Aorta (tissue), 5 donors: ENCODE measurements at regions of chr3 and their contacts with region 1.

Region 1: DNA sequence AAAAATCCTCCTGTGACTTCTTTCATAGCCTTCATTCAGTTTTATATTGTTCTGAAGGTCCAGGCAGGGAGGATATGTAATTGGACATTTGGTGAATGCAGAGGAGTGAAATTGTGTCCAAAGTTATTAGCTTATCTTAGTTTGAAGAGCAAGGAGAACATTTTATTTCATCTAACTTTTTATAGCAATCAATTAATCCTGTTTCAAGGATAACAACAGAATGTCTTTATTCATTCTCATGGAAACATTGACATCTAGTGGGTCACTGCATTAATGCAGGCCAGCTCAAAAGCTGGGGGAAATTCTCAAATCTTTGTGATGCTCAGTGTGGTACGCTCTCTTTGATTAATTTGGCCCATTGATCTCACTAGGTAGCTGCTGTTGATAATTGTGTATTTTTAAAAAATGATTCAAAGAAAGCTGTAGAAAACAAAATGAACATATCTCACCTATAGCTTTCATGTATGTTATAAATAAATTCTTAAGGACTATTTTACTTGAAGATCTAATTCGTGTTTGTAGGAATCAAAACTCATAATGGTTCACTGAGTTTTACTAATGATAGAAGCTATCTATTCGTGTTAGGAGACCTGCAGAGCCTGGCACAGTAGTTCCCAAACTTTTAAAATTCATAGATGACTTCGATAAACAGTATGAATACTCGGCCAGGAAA is 150.8 kb upstream of the KCNMB2 start:
- DNase-seq: no peak
- ATAC-seq: peak; percentile 82
- H3K4me3 ChIP-seq: no peak overlapping the region
- H3K27ac ChIP-seq: no peak overlapping the region
- H3K4me1 ChIP-seq: peaks cover 4 to 8% of the 10 kb centered on the region in 2 donors
- H3K27me3 ChIP-seq: no peaks in the 10 kb centered on the region

Region 2: DNA sequence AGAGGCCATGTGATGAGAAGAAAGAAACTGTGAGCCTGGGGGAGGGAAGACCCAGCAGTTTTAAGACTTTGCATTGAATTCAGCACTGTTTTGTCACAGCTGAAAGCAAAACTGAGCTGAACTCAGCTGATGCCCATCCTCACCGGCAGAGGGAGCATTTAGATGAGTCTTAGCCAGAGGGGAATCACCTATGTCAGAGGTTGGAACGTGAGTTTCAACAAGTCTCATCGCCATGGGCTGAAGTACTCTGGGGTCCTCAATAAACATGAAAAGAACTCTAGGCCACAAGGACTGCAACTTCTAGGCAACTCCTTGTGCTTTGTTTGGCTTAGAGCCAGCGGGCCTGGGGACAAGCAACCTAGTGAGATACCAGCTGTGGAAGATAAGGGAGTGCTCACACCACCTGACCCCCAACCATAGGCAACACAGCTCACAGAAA is 1512.6 kb before region 1 on chr3:
- intact Hi-C with region 1: loop called in 1 of 2 experiments (anchors 10 kb)
- DNase-seq: no peak
- ATAC-seq: peak; percentile 68
- H3K4me3 ChIP-seq: no peak overlapping the region
- H3K27ac ChIP-seq: no peak overlapping the region
- H3K4me1 ChIP-seq: no peaks in the 10 kb centered on the region
- H3K27me3 ChIP-seq: no peaks in the 10 kb centered on the region

Region 3: DNA sequence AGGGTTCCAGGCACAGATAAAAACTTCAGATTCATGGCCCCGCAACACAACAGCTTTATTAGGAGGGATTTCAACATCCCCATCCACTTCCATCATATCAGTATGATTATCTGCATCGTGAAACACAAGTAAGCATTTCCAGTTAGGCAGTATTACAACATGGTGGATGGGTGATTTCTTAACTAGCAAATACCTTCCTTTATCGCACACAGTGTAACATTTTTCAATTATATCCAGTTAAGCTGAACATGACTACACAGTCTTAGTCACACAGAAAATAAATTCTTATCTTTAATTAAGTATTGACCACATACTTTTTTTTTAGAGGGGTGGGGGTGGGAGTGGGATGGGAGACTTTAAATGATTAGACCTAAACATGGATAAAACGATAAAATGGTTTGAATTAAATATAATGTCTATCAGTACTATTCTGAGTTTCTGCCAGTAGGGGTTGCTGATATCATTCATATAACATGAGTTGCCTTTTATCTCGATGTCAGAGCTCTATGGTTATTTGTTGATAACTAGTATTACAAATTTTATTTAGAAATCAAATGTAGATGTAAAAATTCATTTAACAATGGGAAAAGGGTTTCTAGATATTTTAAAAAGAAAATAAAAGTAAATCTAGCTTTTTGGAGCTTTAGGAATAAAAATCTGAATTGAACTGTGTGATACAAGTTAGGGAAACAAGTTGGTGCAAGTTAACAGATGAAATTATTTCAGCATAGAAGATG is 1334.7 kb before region 1 on chr3:
- intact Hi-C with region 1: loop called (anchors 5 to 10 kb)
- DNase-seq: no peak
- ATAC-seq: peak; percentile 79
- H3K4me3 ChIP-seq: no peak overlapping the region
- H3K27ac ChIP-seq: no peak overlapping the region
- H3K4me1 ChIP-seq: peaks cover 0 to 2% of the 10 kb centered on the region in 2 donors
- H3K27me3 ChIP-seq: no peaks in the 10 kb centered on the region

Region 4: GRCh38 chr3:177468331-177468730 is 917.1 kb before region 1 on chr3:
- intact Hi-C with region 1: loop called in 1 of 2 experiments (anchors 10 kb)
- DNase-seq: peak; percentile 76 to 80
- ATAC-seq: no peak
- H3K4me3 ChIP-seq: no peak overlapping the region
- H3K27ac ChIP-seq: peak overlapping the region in 1 of 2 donors; percentile 29
- H3K4me1 ChIP-seq: peaks cover 4 to 9% of the 10 kb centered on the region in 2 donors
- H3K27me3 ChIP-seq: no peaks in the 10 kb centered on the region

Region 5: GRCh38 chr3:177906126-177906511 is 479.3 kb before region 1 on chr3:
- intact Hi-C with region 1: loop called in 1 of 2 experiments (anchors 10 kb)
- DNase-seq: no peak
- ATAC-seq: peak; percentile 88
- H3K4me3 ChIP-seq: no peak overlapping the region
- H3K27ac ChIP-seq: peak overlapping the region; percentile 90 to 93
- H3K4me1 ChIP-seq: peaks cover 2 to 16% of the 10 kb centered on the region in 2 donors
- H3K27me3 ChIP-seq: no peaks in the 10 kb centered on the region

Region 6: GRCh38 chr3:177977381-177978158 is 407.8 kb before region 1 on chr3:
- intact Hi-C with region 1: no loop called
- DNase-seq: no peak
- ATAC-seq: no peak
- H3K4me3 ChIP-seq: no peak overlapping the region
- H3K27ac ChIP-seq: no peak overlapping the region
- H3K4me1 ChIP-seq: peaks cover 0 to 2% of the 10 kb centered on the region in 2 donors
- H3K27me3 ChIP-seq: no peaks in the 10 kb centered on the region

Region 7: DNA sequence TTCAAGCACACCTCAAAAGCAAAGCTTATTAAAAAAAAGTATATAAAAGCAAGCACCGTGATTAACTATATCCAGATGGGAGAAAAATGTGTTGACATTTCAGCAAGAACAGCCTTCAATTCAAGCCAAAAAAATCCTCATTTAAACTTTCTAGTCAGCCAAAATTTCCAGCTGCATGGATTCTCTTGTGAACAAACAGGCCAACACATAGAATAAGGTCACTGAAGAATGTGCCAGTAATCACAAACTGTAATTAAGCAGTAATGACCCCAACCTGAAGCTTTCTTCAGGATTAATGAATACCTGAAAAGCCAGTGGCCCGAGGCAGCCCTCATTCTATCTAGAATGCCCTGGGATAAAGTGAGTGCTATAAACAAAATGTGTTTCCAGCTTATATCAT is 20.1 kb after region 1 on chr3:
- intact Hi-C with region 1: no loop called
- DNase-seq: no peak
- ATAC-seq: no peak
- H3K4me3 ChIP-seq: no peak overlapping the region
- H3K27ac ChIP-seq: no peak overlapping the region
- H3K4me1 ChIP-seq: no peaks in the 10 kb centered on the region
- H3K27me3 ChIP-seq: no peaks in the 10 kb centered on the region